Panc1 (cell line): ENCODE measurements at regions of chr2 and their contacts with region 1.

Region 1: GRCh38 chr2:20446917-20447436 is at the start of gene RHOB:
- DNase-seq: peak; percentile 90
- ATAC-seq: peak; percentile 91
- H3K4me3 ChIP-seq: peak within 1 kb of the TSS; percentile 73 to 81
- H3K27ac ChIP-seq: peak within 1 kb of the TSS; percentile 76
- H3K4me1 ChIP-seq: peaks cover 41% of the 10 kb centered on the region
- H3K27me3 ChIP-seq: no peaks in the 10 kb centered on the region
- CTCF ChIP-seq: no peak
- total RNA-seq, gene RHOB: 38.9 TPM

Region 2: DNA sequence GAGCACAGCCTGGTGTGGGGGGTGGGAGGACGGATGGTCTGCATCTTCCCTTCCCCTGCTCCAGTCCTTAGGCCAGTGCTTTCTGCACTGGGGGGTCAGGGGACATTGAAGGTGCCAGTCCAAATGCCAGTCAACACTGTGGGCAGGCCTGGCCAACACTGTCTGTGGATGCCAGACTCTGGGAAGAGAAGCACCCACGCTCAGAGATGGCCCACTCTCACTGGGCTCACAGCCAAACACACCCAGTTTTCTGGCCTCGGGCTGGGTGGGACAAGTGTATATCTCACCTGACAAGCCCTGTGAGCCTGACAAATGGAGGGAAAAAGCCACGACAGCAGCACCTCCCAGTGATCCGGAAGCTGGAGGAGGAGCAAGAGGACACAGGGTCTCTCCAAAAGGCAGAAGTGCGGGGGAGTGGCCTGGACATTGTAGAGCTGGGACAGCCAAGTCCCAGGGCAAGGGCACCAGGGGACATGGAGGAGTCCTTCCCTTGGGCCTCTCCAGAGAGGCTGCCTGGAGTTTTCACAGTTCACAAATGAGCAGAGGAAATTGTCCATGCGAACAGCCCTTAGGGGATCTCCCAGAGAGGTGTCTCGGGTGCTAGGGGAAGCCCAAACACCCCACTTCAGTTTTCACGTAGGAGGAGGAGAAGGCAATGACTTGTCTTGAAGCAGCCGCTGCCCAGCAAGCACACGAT is 301.3 kb before region 1 on chr2:
- CTCF ChIA-PET with region 1: no interaction called
- POLR2A ChIA-PET with region 1: no interaction called
- in situ Hi-C with region 1: no loop called
- intact Hi-C with region 1: no loop called
- DNase-seq: no peak
- ATAC-seq: no peak
- H3K4me3 ChIP-seq: no peak overlapping the region
- H3K27ac ChIP-seq: no peak overlapping the region
- H3K4me1 ChIP-seq: no peaks in the 10 kb centered on the region
- H3K27me3 ChIP-seq: no peaks in the 10 kb centered on the region
- CTCF ChIP-seq: no peak

Region 3: DNA sequence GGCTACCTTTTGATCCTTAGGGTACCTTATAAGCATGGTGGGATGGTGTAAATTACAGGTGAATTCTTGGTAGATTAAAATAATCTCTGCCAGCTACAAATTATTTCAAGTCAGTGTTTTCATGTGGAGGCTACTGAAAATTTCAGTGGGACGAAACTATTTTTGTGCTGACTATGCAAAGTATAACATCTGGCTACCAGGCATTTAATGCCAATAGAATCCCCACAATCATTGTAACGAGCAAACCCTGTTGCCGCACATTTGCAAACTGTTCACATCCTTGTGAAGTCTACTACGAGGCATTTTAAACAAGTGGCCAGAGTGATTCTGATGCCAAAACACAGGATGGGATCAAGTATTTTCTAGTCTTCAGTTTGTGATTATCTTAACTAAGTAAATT is 173.9 kb before region 1 on chr2:
- CTCF ChIA-PET with region 1: no interaction called
- POLR2A ChIA-PET with region 1: no interaction called
- in situ Hi-C with region 1: no loop called
- intact Hi-C with region 1: no loop called
- DNase-seq: no peak
- ATAC-seq: no peak
- H3K4me3 ChIP-seq: no peak overlapping the region
- H3K27ac ChIP-seq: no peak overlapping the region
- H3K4me1 ChIP-seq: no peaks in the 10 kb centered on the region
- H3K27me3 ChIP-seq: no peaks in the 10 kb centered on the region
- CTCF ChIP-seq: no peak

Region 4: DNA sequence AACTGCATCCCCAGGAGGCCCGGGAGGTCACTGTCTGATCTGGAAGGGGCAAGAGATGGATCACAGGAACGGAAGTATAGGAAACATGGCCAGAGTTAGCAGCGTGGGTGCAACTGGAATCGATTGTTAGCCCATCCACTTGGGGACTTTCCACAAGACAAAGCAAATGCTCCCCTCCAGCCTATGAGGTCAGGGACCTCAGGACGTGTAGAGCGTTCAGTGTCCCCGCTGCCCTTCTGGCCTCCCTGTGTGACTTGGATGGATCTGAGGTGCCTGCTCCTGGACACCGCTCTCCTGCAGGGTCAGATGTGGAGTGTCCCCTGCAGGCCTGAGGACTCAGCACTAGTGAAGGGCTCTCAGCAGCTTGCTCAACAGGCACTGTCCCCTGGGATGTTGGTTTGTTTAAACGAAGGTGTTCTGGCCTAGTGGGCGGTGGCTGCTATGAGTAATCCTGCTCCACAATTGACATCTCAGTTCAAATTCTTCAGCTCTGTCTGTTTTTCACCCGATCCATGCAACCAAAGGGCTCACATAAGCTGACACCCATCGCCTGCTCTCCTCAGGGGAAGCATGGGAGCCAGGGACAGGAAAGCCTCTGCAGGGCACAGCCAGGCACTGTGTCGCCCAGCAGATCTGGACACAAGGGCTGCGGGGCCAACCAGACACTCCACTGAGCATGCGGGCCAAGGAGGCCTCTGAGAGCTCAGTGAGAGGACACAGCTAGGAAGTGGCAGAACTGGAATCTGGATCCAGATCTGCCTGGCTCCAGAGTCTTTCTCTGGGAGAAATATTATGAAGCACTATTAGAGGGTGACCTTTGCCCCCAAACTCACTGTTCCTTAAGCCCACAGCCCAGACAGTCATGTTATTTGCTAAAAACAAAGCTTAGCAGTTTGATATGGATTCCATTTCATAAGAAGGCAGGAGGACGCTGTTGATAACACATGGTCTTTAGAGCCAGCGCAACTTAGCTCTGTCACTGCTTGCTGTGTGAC is 78.4 kb after region 1 on chr2:
- CTCF ChIA-PET with region 1: no interaction called
- POLR2A ChIA-PET with region 1: interaction called, 11 read pairs
- in situ Hi-C with region 1: loop called (anchors 10 kb)
- intact Hi-C with region 1: no loop called
- DNase-seq: no peak
- ATAC-seq: peak; percentile 60
- H3K4me3 ChIP-seq: no peak overlapping the region
- H3K27ac ChIP-seq: no peak overlapping the region
- H3K4me1 ChIP-seq: no peaks in the 10 kb centered on the region
- H3K27me3 ChIP-seq: no peaks in the 10 kb centered on the region
- CTCF ChIP-seq: no peak

Region 5: GRCh38 chr2:20635675-20636584 is 189.0 kb after region 1 on chr2:
- CTCF ChIA-PET with region 1: interaction called, 12 read pairs
- POLR2A ChIA-PET with region 1: no interaction called
- in situ Hi-C with region 1: loop called (anchors 25 kb)
- intact Hi-C with region 1: loop called (anchors 1 kb)
- DNase-seq: no peak
- ATAC-seq: peak; percentile 97
- H3K4me3 ChIP-seq: no peak overlapping the region
- H3K27ac ChIP-seq: no peak overlapping the region
- H3K4me1 ChIP-seq: no peaks in the 10 kb centered on the region
- H3K27me3 ChIP-seq: no peaks in the 10 kb centered on the region
- CTCF ChIP-seq: peak; percentile 95

Region 6: GRCh38 chr2:20650880-20651730 is 204.1 kb after region 1 on chr2 and contains the start of gene HS1BP3:
- CTCF ChIA-PET with region 1: interaction called, 3 read pairs
- POLR2A ChIA-PET with region 1: interaction called, 5 read pairs
- in situ Hi-C with region 1: loop called (anchors 25 kb)
- intact Hi-C with region 1: loop called (anchors 5 kb)
- DNase-seq: no peak
- ATAC-seq: peak; percentile 98
- H3K4me3 ChIP-seq: peak within 1 kb of the TSS; percentile 87 to 93
- H3K27ac ChIP-seq: peak within 1 kb of the TSS; percentile 88
- H3K4me1 ChIP-seq: peaks cover 9% of the 10 kb centered on the region
- H3K27me3 ChIP-seq: no peaks in the 10 kb centered on the region
- CTCF ChIP-seq: peak; percentile 98
- total RNA-seq, gene HS1BP3: 46.1 TPM